ENCODE measurements at regions of chrX and their contacts with region 1.

Region 1: DNA sequence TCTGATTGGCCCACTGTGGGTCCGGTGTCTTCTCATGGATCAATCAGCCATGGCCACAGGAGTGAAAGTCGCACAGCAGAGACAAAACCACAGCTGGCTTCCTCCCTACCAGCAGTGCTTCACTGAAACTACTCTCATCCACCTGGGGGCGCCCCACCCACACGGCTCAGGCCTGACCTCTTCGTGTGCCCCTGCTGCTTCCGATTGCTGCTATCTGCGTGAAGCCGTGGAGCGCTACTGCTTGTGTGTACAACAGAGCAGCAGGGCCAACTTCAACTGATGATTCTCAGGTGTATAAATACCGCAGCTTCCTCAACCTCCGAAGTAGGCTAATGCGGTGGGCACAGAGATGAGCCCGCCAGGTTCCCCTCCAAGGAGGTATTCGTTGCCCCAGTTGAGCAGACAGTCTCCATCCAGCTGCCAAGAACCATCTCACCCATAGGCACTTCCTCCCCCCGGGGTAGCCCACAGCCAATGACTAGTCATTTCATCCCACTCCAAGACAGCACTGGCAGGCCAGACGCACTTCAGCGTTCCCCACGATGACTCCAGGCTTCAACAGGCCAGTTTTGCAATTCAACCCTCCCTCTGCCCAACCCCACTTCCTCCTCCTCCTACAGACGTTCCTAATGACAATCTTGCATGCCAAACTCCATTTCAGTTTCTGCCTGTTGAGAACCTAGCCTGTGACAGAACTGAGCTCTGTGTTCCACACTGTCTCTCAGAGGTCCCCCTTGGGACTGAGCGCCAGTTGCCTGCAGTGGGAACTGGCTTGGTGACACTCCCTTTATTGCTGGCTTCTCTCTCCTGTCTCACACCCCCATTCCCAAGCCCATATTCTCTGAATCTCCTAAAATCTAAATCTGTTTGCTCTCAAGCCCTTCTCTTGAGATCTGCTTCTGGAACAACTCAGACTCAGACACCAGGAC is 41.3 kb upstream of the ATP6AP2 start:
- DNase-seq: peak; percentile 46 to 80 (median 72)
- ATAC-seq: peak; percentile 94
- H3K4me3 ChIP-seq: no peak overlapping the region
- H3K4me3 Mint-ChIP-seq: peak overlapping the region; percentile 50
- H3K27ac ChIP-seq: no peak overlapping the region
- H3K27ac Mint-ChIP-seq: peak overlapping the region; percentile 76
- H3K4me1 ChIP-seq: peaks cover 11% of the 10 kb centered on the region
- H3K4me1 Mint-ChIP-seq: peaks cover 20% of the 10 kb centered on the region
- H3K27me3 ChIP-seq: no peaks in the 10 kb centered on the region
- H3K27me3 Mint-ChIP-seq: no peaks in the 10 kb centered on the region
- CTCF ChIP-seq: peak; percentile 35

Region 2: DNA sequence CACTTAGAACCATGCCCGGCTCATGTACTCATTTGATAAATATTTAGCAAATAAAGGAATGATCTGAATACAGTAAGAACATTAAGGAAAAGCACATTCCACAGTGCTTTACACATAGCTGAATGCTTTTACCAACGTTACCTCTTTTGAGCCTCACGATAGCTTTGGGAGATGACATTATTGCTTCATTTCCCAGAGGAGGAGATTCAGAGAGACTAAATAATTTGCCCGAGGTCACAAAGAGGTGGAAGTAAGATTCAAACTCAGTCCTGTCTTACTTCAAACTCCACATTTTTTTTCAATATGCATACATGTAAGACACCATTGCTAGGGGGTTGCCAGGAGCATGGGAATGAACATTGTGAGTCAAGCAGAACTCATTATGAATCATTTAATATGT is 980.2 kb before region 1 on chrX:
- CTCF ChIA-PET with region 1: no interaction called
- POLR2A ChIA-PET with region 1: no interaction called
- intact Hi-C with region 1: no loop called
- DNase-seq: no peak
- ATAC-seq: no peak
- H3K4me3 ChIP-seq: no peak overlapping the region
- H3K4me3 Mint-ChIP-seq: no peak overlapping the region
- H3K27ac ChIP-seq: no peak overlapping the region
- H3K27ac Mint-ChIP-seq: no peak overlapping the region
- H3K4me1 ChIP-seq: no peaks in the 10 kb centered on the region
- H3K4me1 Mint-ChIP-seq: no peaks in the 10 kb centered on the region
- H3K27me3 ChIP-seq: no peaks in the 10 kb centered on the region
- H3K27me3 Mint-ChIP-seq: no peaks in the 10 kb centered on the region
- CTCF ChIP-seq: no peak

Region 3: DNA sequence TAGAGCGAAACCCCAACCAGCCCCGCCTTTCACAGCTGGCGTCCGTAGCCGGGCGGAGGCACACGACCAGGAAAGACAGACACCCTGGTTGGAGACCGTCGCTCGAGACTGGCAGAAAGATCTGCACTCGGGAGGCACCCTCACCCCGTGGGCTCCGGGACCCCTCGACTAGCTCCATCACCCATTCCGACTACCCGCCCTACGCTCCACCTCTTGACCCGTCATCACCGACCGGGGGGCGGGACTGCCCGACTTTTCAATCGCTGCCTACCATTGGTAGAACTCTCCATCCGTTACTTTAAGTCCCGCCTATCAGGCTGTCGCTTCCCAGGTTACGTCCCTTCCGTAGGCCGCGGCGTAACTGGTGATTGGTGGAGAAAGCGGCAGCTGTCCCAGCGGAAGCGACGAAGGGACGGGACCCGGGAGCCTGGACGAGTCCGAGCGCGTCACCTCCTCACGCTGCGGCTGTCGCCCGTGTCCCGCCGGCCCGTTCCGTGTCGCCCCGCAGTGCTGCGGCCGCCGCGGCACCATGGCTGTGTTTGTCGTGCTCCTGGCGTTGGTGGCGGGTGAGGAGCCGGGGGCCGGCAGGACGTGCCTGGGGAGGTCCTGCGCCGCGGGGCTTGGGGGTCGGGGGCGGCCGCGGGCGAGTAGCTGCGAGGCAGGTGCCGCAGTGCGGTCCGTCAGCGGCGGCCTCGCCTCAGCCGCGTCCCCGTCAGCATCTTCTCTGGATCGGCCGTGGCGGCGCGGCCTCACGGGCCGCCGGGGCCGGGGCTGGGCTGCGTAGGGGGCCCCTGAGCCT is 41.3 kb after region 1 on chrX and contains the start of gene ATP6AP2:
- CTCF ChIA-PET with region 1: interaction called, 6 read pairs
- POLR2A ChIA-PET with region 1: interaction called, 3 read pairs
- intact Hi-C with region 1: loop called in 1 of 2 experiments (anchors 5 kb)
- DNase-seq: peak; percentile 76 to 95 (median 88)
- ATAC-seq: peak; percentile 95
- H3K4me3 ChIP-seq: peak within 1 kb of the TSS; percentile 82 to 93
- H3K4me3 Mint-ChIP-seq: peak within 1 kb of the TSS; percentile 91
- H3K27ac ChIP-seq: peak within 1 kb of the TSS; percentile 89 to 96
- H3K27ac Mint-ChIP-seq: peak within 1 kb of the TSS; percentile 97
- H3K4me1 ChIP-seq: peaks cover 18% of the 10 kb centered on the region
- H3K4me1 Mint-ChIP-seq: peaks cover 30% of the 10 kb centered on the region
- H3K27me3 ChIP-seq: no peaks in the 10 kb centered on the region
- H3K27me3 Mint-ChIP-seq: no peaks in the 10 kb centered on the region
- CTCF ChIP-seq: no peak
- total RNA-seq, gene ATP6AP2: 62.0 to 67.3 TPM

Region 4: DNA sequence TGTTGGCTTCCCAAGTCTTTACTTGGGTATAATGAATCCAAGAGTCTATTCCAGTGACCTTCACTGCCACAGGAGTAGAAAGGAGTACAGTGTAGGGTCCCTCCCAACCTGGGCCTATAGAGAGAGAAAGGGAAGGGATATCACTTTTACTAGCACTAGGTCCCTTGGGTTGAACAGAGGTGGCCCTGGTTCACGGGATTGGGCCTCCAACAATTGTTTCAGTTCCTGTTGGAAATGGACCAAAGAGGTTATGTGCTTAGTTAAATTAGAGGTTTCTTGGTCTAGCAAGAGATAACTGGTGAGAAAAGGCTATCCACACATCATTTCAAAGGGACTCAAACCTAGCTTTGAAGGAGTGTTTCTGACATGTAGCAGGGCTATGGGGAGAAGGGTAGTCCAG is 253.0 kb after region 1 on chrX:
- CTCF ChIA-PET with region 1: interaction called, 18 read pairs
- POLR2A ChIA-PET with region 1: no interaction called
- intact Hi-C with region 1: loop called in 1 of 2 experiments (anchors 2 kb)
- DNase-seq: no peak
- ATAC-seq: no peak
- H3K4me3 ChIP-seq: no peak overlapping the region
- H3K4me3 Mint-ChIP-seq: no peak overlapping the region
- H3K27ac ChIP-seq: no peak overlapping the region
- H3K27ac Mint-ChIP-seq: no peak overlapping the region
- H3K4me1 ChIP-seq: no peaks in the 10 kb centered on the region
- H3K4me1 Mint-ChIP-seq: peaks cover 3% of the 10 kb centered on the region
- H3K27me3 ChIP-seq: no peaks in the 10 kb centered on the region
- H3K27me3 Mint-ChIP-seq: no peaks in the 10 kb centered on the region
- CTCF ChIP-seq: no peak

Region 5: DNA sequence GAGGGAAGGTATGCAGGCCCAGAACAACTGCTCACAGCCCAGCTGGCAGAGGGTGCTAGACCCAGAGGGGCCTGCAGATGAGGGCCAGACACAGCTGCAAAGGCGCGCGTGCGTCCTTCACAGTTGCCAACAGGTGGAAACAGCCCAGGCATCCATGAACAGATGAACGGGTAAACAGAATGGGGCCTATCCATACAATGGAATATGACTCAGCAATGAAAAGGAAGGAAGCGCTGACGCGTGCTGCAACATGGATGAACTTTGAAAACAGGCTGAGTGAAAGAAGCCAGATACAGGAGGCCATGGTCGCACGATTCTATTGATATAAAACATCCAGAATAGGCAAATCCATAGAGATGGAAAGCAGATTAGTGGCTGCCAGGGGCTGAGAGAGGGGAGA is 711.4 kb after region 1 on chrX:
- CTCF ChIA-PET with region 1: interaction called, 4 read pairs
- POLR2A ChIA-PET with region 1: no interaction called
- intact Hi-C with region 1: loop called (anchors 5 to 10 kb)
- DNase-seq: peak in 1 of 9 experiments; percentile 29
- ATAC-seq: no peak
- H3K4me3 ChIP-seq: no peak overlapping the region
- H3K4me3 Mint-ChIP-seq: no peak overlapping the region
- H3K27ac ChIP-seq: no peak overlapping the region
- H3K27ac Mint-ChIP-seq: no peak overlapping the region
- H3K4me1 ChIP-seq: peaks cover 5% of the 10 kb centered on the region
- H3K4me1 Mint-ChIP-seq: peaks cover 3% of the 10 kb centered on the region
- H3K27me3 ChIP-seq: no peaks in the 10 kb centered on the region
- H3K27me3 Mint-ChIP-seq: no peaks in the 10 kb centered on the region
- CTCF ChIP-seq: no peak

Region 6: DNA sequence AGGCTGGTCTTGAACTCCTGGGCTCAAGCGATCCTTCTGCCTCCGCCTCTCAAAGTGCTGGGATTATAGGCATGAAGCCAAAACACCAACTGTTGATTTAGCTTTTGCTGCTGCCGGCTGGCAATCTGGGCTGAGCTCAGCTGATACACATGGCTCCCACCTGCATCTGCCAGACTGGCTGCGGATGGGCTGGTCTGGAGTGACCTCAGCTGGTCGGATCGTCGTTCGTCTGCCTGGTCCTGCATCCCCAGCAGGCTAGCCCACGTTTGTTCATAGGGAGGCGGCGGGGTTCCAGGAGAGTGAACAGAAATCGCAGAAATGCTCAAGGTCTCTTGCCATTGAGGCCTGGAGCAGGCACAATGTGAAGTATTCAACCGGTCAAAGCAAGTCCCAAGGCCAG is 720.0 kb after region 1 on chrX:
- CTCF ChIA-PET with region 1: no interaction called
- POLR2A ChIA-PET with region 1: no interaction called
- intact Hi-C with region 1: loop called (anchors 5 to 10 kb)
- DNase-seq: no peak
- ATAC-seq: no peak
- H3K4me3 ChIP-seq: no peak overlapping the region
- H3K4me3 Mint-ChIP-seq: no peak overlapping the region
- H3K27ac ChIP-seq: no peak overlapping the region
- H3K27ac Mint-ChIP-seq: no peak overlapping the region
- H3K4me1 ChIP-seq: no peaks in the 10 kb centered on the region
- H3K4me1 Mint-ChIP-seq: no peaks in the 10 kb centered on the region
- H3K27me3 ChIP-seq: no peaks in the 10 kb centered on the region
- H3K27me3 Mint-ChIP-seq: no peaks in the 10 kb centered on the region
- CTCF ChIP-seq: no peak